Left colon (tissue), 2 donors: ENCODE measurements at regions of chr9 and their contacts with region 1.

Region 1: DNA sequence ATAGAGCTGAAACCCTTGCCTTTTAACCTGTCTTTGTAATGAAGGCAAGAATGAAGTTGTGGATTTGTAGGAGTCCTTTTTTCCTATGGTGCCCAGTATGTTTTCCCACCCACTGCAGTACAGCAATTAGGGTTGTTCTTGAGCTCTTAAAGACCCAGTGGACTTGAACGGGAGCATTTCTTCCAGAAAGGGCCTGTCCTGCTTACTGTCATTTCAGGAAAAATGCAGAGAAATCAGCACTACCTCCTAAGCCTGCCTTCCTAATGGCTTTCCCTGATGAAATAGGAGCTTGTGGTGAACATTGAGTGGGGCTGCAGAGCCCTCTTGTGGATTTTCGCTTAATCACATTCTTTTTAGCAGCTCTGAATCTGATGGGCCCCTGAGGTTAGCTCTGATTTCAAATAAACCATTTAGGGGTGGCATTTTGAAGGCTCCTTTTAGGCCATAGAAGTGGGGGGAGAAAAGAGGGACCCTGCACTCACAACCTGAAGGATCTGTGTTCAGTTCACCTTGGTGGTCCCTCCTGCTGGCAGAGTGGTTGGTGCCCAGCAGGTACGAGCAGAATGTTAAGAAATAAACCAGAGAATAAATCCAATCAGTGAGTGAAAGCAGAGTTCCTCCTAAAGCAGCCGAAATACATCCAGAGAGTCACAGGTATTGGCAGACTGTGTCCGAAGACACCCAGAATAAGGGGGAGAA is 188.0 kb upstream of the KLF9 start:
- DNase-seq: peak in 1 of 2 donors; percentile 47
- ATAC-seq: peak; percentile 87

Region 2: DNA sequence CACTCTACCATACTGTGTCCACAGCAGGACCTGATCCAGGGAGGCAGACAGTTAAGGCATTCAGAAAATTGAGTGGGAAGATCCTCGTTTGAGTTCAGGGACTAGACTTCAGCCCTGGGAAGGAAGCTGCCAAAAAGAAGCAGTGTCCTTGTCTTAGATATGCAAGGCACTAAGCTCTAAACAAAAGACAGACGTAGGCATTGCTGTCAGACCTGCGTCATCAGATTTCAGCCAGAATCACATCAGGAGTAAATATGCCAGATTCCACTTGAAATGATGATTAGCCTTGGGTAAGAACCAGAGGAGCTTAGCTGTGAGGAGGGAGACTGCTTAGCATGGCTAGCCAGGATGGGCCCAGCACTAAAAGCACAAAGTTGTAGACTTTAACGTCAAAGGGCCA is 502.1 kb before region 1 on chr9:
- intact Hi-C with region 1: loop called in 1 of 2 experiments (anchors 10 kb)
- DNase-seq: peak in 1 of 2 donors; percentile 46
- ATAC-seq: no peak

Region 3: GRCh38 chr9:70352802-70353201 is 249.7 kb before region 1 on chr9:
- intact Hi-C with region 1: loop called (anchors 5 to 10 kb)
- DNase-seq: no peak
- ATAC-seq: peak; percentile 40

Region 4: DNA sequence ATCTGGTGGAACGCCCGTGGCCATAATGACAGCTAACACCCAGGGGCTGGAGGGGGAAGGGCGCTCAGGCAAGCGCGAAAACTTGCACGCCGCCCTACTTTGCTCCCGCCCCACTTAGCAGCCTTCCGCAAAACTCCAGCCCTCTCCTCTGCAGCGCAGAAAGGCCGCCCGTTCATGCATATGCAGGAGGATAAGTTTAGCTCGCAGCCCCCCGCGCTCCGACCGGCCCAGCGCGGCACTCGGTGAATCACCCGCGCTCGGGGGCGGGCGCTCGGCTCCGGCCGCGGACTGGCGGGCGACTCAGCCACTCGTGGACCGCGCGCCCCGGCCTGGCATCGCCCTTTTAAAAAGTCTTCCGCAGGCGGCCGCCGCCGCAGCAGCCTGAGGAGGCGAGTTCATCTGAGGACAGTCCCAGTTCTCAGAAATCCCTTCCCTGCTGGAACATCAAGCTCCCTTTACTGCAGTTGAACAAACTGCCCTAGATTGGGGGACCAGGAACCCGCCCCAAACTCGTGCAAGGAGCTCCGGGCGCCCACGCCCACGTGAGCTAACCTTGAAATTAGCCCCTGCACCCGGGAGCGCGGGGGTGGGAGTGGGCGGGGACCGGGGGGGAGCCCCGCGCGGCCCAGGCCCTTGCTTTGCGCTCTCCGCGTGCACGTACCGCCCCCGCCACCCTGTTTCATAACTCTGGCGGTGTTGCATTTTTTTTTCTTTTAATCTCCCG is 183.5 kb before region 1 on chr9:
- intact Hi-C with region 1: loop called in 1 of 2 experiments (anchors 5 kb)
- DNase-seq: peak; percentile 93 to 97
- ATAC-seq: peak; percentile 56

Region 5: GRCh38 chr9:70656281-70656680 is 53.8 kb after region 1 on chr9:
- intact Hi-C with region 1: no loop called
- DNase-seq: no peak
- ATAC-seq: no peak